Right ventricle myocardium superior (tissue), 1 donor: ENCODE measurements at regions of chr12 and their contacts with region 1.

Region 1: DNA sequence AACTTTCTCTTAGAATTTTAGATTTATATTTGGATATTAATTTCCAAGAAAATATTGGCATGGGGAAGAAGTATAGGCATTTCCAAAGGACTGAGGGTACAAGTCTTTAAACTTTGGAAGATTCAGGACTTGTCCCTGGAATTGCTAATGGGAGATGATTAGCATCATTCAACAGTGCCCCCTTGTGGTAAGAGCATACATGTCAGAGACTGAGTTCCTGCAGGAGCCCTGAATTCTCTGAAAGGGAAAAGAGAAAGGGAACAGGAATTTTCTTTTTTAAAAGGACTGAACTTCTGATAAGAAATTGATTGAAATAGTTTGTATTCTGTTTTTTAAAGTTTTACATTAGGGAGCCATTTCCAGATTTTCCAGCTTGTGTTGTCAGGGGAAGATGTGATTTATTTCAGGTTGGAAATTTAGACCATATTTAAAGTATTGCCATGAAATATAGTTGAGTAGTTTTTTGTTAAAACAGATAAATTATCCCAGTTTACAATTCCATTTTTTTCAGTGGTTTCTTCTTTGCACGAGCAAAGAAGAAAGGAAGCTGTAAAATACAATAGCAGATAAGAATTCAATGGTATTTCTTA is 44.0 kb upstream of the REP15 start:
- DNase-seq: no peak
- ATAC-seq: peak; percentile 89

Region 2: DNA sequence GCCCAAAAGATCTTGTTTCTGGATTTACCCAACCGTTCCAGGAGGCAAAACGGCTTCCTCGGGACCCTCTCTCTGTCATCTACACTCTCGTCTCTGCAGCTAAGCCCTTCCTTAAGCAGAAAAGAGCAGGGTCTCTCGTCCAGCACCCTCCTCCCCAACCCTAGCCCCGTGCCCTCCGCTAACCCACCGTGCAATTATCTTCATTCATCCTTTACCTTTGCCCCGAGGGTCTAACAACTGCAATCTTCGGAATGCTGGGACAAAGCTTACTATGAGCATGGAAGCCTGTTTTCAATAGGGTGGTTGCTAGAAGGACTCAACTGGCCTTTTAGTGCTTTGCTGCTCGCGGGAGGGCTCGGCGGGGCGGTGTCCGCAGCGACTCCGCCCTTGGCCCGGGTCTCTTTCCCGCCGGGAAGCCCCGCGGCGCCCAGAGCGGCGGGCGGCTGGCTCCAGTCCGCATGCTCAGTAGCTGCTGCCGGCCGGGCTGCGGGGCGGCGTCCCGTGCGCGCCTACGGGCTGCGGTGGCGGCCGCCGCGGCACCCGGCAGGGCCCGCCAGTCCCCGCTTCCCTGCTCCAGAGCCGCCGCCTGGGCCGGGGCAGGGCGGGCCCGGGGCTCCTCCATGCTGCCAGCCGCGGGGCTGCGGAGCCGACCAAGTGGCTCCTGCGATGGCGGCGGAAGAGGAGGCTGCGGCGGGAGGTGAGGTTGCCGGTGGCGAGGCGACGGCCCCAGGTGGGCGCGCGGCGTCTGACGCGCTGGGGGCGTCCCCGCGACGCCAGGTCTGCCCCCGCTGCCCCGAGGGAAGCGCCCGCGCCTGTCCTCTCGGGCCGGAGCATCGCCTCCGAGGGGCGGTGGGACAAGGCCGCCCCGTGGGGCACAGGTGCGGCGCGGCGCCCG is 319.6 kb before region 1 on chr12 and contains the start of gene BMAL2:
- intact Hi-C with region 1: loop called (anchors 10 kb)
- DNase-seq: peak; percentile 57
- ATAC-seq: peak; percentile 84
- total RNA-seq, gene BMAL2: 1.1 TPM

Region 3: DNA sequence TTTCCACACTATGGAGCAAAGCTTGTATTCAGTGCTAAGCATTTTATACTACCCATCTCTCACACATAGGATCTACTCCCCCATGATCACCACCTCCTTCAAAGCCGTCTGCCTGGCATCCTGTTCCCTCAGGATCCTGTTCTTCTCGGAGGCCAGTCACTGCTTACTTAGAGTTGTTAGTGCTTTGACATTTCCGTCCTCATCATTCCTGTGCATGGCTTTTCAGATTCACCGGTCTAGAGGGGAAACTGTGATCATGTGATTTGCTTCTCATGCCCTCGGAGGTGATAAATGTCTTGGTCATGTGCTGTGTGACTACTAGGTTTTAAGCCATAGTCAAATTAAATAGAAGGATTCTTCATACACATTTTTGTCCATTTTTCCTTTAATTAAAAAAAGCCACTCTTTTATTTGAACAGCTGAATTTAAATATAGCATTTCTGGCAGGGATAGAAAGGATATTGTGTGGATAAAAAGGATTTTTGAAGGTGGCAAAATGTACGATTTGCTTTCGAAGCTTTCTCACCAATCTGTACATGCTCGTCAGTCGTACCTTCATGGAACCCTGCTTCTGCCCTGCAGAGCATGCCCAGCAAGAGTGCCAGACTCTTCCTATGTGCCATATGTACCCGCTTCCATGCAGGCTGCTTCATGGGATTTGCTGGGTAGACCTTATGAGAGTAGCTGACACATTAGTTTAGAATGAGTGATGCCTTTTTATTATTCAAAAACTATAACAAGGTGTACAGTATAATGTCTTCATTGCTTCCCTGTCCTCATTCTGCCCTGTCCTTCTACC is 266.3 kb before region 1 on chr12:
- intact Hi-C with region 1: no loop called
- DNase-seq: no peak
- ATAC-seq: no peak